ENCODE measurements at regions of chr21 and their contacts with region 1.

Region 1: DNA sequence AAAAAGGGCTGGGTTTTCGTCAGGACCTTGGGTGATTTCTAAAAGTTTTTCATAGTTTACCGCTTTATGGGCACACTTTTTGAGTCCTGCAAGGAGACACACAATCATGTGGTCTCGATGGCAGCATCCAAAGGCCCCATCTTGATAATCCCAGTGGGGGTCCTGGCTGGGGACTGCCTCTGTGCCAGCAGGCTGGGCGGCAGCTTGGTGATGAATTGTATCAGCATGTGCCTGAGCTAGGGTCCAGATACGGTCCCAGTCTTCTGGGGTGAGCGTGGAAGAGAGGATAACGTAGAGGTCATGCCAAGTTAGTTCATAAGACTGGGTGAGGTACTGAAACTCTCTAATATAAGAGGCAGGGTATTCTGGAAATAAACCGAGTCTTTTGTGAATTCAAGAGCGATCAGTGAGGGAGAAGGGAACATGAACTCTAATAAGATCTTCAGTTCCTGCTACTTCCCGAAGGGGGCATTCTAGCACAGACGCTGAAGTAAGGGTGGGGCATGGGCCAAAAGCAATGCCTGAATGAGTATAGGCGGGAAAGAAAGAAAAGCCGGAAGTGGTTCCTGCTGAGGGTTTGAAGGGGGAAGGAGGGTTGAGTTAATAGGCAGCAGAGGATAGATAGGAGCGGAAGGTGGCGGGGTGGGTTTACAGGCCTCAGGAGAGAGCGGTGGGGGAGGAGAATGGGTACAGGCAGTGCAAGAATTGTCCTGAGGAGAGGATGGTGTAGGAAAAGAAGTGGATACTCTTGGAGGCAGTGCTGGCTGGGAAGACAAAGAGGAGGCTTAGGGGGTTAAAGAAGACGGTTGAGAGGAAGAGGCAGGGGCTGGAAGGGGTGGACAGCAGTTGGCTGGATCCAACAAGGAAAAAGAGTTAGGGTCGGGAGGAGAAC is 1.6 kb downstream of the ERVH48-1 start:
- DNase-seq: peak; percentile 40
- H3K4me3 ChIP-seq: no peak overlapping the region
- H3K27me3 ChIP-seq: no peaks in the 10 kb centered on the region
- CTCF ChIP-seq: peak; percentile 81

Region 2: GRCh38 chr21:42913476-42913875 is 10.3 kb before region 1 on chr21:
- CTCF ChIA-PET with region 1: no interaction called
- POLR2A ChIA-PET with region 1: interaction called, 20 read pairs
- DNase-seq: no peak
- H3K4me3 ChIP-seq: no peak overlapping the region
- H3K27me3 ChIP-seq: no peaks in the 10 kb centered on the region
- CTCF ChIP-seq: no peak

Region 3: GRCh38 chr21:43015921-43016540 is 92.2 kb after region 1 on chr21:
- CTCF ChIA-PET with region 1: no interaction called
- POLR2A ChIA-PET with region 1: no interaction called
- DNase-seq: no peak
- H3K4me3 ChIP-seq: no peak overlapping the region
- H3K27me3 ChIP-seq: no peaks in the 10 kb centered on the region
- CTCF ChIP-seq: no peak